ENCODE measurements at regions of chr2 and their contacts with region 1.

Region 1: GRCh38 chr2:27086090-27086723 is 365 bp upstream of the KHK start:
- DNase-seq: peak; percentile 96 to 97
- ATAC-seq: peak; percentile 86 to 95 (median 92)
- H3K4me3 ChIP-seq: peak overlapping the region; percentile 56 to 80 (median 74)
- H3K27ac ChIP-seq: peak overlapping the region; percentile 83 to 98 (median 93)
- H3K4me1 ChIP-seq: peaks cover 5 to 54% (median 35%) of the 10 kb centered on the region in 9 donors
- H3K27me3 ChIP-seq: no peaks in the 10 kb centered on the region
- CTCF ChIP-seq: peak; percentile 78 to 97 (median 89)

Region 2: GRCh38 chr2:26901326-26902183 is 184.7 kb before region 1 on chr2:
- intact Hi-C with region 1: no loop called
- DNase-seq: peak in 1 of 2 donors; percentile 19
- ATAC-seq: peak; percentile 30 to 75 (median 62)
- H3K4me3 ChIP-seq: no peak overlapping the region
- H3K27ac ChIP-seq: no peak overlapping the region
- H3K4me1 ChIP-seq: peaks cover 0 to 11% (median 0%) of the 10 kb centered on the region in 9 donors
- H3K27me3 ChIP-seq: no peaks in the 10 kb centered on the region
- CTCF ChIP-seq: no peak

Region 3: DNA sequence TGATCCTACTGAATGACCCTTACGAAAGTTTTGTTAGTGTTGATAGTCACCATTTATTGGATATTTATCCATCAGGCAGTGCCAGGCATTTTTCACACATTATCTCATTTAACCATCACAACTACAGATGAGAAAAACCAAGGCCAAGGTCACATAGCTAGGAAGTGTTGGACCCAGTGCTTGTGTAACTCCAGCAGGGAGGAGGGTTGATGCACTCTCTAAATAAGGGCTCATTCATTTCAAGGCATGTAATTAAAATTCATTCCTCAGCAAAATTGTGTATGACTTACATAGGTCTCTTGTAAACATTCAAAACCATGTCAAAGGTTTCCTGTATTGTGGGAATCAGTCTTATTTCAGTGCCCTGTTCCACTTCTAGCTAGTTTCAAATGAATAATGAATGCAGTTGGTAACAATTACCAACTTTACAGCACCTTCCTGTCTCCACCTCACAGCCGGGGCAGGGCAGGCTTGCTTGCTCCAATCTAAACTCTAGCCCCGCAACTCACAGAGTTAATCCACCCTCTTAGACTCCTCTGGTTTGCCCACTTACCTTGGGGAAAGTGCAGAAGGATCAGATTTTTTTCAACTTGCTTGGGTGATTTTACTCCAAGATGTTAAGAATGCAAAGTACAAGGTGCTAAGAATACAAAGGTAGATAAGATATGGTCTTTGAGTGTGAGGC is 121.6 kb before region 1 on chr2:
- intact Hi-C with region 1: loop called in 9 of 10 experiments (anchors 2 to 10 kb)
- DNase-seq: no peak
- ATAC-seq: no peak
- H3K4me3 ChIP-seq: no peak overlapping the region
- H3K27ac ChIP-seq: no peak overlapping the region
- H3K4me1 ChIP-seq: peaks cover 0 to 10% (median 0%) of the 10 kb centered on the region in 9 donors
- H3K27me3 ChIP-seq: peaks cover 0 to 21% (median 0%) of the 10 kb centered on the region in 7 donors
- CTCF ChIP-seq: no peak

Region 4: GRCh38 chr2:26970244-26970920 is 115.8 kb before region 1 on chr2 and contains the start of gene MAPRE3:
- intact Hi-C with region 1: loop called in 3 of 10 experiments (anchors 10 kb)
- DNase-seq: peak; percentile 77 to 86
- ATAC-seq: peak; percentile 93 to 96 (median 94)
- H3K4me3 ChIP-seq: peak within 1 kb of the TSS; percentile 68 to 95 (median 86)
- H3K27ac ChIP-seq: peak within 1 kb of the TSS in 9 of 10 donors; percentile 68 to 84 (median 81)
- H3K4me1 ChIP-seq: peaks cover 3 to 33% (median 26%) of the 10 kb centered on the region in 9 donors
- H3K27me3 ChIP-seq: peaks cover 0 to under 1% (median 0%) of the 10 kb centered on the region in 7 donors
- CTCF ChIP-seq: no peak
- total RNA-seq, gene MAPRE3: 34.9 to 62.0 (median 47.2) TPM

Region 5: GRCh38 chr2:27032495-27033252 is 53.5 kb before region 1 on chr2 and contains the start of gene TMEM214:
- intact Hi-C with region 1: loop called in 7 of 10 experiments (anchors 2 to 10 kb)
- DNase-seq: peak; percentile 89 to 92
- ATAC-seq: peak; percentile 97 to 99 (median 98)
- H3K4me3 ChIP-seq: peak within 1 kb of the TSS; percentile 68 to 97 (median 86)
- H3K27ac ChIP-seq: peak within 1 kb of the TSS; percentile 76 to 96 (median 88)
- H3K4me1 ChIP-seq: peaks cover 0 to 35% (median 24%) of the 10 kb centered on the region in 9 donors
- H3K27me3 ChIP-seq: no peaks in the 10 kb centered on the region
- CTCF ChIP-seq: peak in 1 of 9 donors; percentile 19
- total RNA-seq, gene TMEM214: 24.7 to 53.4 (median 28.0) TPM

Region 6: GRCh38 chr2:27050281-27050995 is 35.8 kb before region 1 on chr2:
- intact Hi-C with region 1: loop called in 6 of 10 experiments (anchors 1 to 5 kb)
- DNase-seq: peak; percentile 85 to 95
- ATAC-seq: peak; percentile 79 to 94 (median 90)
- H3K4me3 ChIP-seq: peak overlapping the region; percentile 78 to 97 (median 94)
- H3K27ac ChIP-seq: peak overlapping the region; percentile 15 to 92 (median 88)
- H3K4me1 ChIP-seq: peaks cover 7 to 22% (median 16%) of the 10 kb centered on the region in 9 donors
- H3K27me3 ChIP-seq: no peaks in the 10 kb centered on the region
- CTCF ChIP-seq: peak in 8 of 9 donors; percentile 15 to 59 (median 50)

Region 7: DNA sequence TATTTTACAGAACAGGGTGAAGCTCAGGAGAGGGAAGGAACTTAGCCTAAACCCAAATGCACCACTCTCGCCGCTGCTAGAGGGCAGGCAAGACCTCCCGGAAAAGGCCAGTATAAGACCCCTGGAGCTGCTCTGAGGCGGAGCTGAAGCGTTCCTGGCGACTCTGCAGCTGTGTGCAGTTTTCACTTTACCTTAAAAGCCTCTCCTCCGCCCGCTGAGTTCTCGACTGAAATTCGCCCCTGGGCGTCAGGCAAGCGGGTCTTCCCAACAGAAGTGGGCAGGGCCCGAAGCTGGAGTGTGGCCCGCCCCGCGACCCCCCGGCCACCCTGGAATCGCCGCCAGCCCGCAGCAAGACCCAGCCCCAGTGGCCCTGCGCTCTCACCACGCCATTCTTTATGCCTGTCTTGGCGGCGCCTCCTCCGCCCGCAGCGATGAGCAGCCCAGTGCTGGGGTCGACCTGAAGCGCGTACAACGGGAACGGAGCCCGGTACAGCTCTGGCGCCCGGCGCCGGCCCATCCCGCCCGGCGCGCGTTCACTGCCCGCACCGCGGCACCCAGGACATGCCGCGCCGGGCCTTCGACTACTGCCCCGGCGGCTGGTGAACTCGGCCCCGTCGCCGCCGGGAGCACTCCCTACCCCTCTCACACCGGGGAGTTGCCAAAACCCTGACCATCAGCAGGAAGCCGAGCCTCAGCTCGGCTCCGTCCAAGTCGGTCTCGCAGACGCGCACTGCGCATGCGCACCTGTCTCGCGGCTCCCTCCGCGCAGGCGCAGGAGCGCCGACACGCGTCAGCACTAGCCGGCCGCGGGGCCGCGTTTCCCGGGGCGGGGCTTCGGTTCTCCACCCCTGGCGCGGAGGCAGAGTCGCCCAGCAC is 47.9 kb after region 1 on chr2 and contains the start of gene PREB:
- intact Hi-C with region 1: loop called in 1 of 10 experiments (anchors 1 kb)
- DNase-seq: peak; percentile 97 to 99
- ATAC-seq: peak; percentile 94 to 98 (median 98)
- H3K4me3 ChIP-seq: peak within 1 kb of the TSS; percentile 85 to 100 (median 94)
- H3K27ac ChIP-seq: peak within 1 kb of the TSS; percentile 75 to 96 (median 90)
- H3K4me1 ChIP-seq: peaks cover 5 to 19% (median 15%) of the 10 kb centered on the region in 9 donors
- H3K27me3 ChIP-seq: no peaks in the 10 kb centered on the region
- CTCF ChIP-seq: peak in 4 of 9 donors; percentile 5 to 36 (median 26)
- total RNA-seq, gene PREB: 41.6 to 57.2 (median 48.7) TPM

Measured in heart right ventricle (tissue), 16 donors.